ENCODE measurements at regions of chr15 and their contacts with region 1.

Region 1: GRCh38 chr15:88918738-88919137 is 5.6 kb upstream of the MFGE8 start:
- DNase-seq: no peak
- ATAC-seq: no peak
- H3K4me3 ChIP-seq: no peak overlapping the region
- H3K4me3 Mint-ChIP-seq: no peak overlapping the region
- H3K27ac ChIP-seq: no peak overlapping the region
- H3K27ac Mint-ChIP-seq: no peak overlapping the region
- H3K4me1 ChIP-seq: peaks cover 0 to 3% of the 10 kb centered on the region in 2 donors
- H3K4me1 Mint-ChIP-seq: peaks cover under 1% of the 10 kb centered on the region
- H3K27me3 ChIP-seq: peaks cover 0 to 7% (median 0%) of the 10 kb centered on the region in 4 experiments
- H3K27me3 Mint-ChIP-seq: peaks cover 45% of the 10 kb centered on the region
- CTCF ChIP-seq: no peak

Region 2: DNA sequence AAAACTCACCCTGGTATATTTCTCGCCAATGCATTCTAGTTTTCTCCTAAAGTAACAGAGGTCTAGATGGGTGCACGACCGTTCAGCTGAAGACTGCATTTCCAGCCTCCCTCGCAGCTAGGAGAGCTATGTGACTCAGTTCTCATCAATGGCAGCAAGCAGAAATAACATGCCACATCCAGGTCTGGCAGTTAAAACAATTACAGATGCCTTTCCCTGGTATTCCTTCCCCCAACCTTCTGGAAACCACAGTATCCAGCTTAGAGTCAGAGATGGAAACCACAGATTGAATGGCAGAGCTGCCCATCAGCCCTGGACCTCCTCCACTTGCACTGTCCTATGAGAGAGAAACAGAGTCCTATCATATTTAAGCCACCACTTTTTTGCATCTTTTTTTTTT is 28.2 kb before region 1 on chr15:
- CTCF ChIA-PET with region 1: no interaction called
- POLR2A ChIA-PET with region 1: no interaction called
- intact Hi-C with region 1: no loop called
- DNase-seq: no peak
- ATAC-seq: no peak
- H3K4me3 ChIP-seq: no peak overlapping the region
- H3K4me3 Mint-ChIP-seq: no peak overlapping the region
- H3K27ac ChIP-seq: no peak overlapping the region
- H3K27ac Mint-ChIP-seq: no peak overlapping the region
- H3K4me1 ChIP-seq: peaks cover 9 to 16% of the 10 kb centered on the region in 2 donors
- H3K4me1 Mint-ChIP-seq: peaks cover 8% of the 10 kb centered on the region
- H3K27me3 ChIP-seq: peaks cover 0 to 10% (median 0%) of the 10 kb centered on the region in 4 experiments
- H3K27me3 Mint-ChIP-seq: peaks cover 5% of the 10 kb centered on the region
- CTCF ChIP-seq: no peak

Region 3: DNA sequence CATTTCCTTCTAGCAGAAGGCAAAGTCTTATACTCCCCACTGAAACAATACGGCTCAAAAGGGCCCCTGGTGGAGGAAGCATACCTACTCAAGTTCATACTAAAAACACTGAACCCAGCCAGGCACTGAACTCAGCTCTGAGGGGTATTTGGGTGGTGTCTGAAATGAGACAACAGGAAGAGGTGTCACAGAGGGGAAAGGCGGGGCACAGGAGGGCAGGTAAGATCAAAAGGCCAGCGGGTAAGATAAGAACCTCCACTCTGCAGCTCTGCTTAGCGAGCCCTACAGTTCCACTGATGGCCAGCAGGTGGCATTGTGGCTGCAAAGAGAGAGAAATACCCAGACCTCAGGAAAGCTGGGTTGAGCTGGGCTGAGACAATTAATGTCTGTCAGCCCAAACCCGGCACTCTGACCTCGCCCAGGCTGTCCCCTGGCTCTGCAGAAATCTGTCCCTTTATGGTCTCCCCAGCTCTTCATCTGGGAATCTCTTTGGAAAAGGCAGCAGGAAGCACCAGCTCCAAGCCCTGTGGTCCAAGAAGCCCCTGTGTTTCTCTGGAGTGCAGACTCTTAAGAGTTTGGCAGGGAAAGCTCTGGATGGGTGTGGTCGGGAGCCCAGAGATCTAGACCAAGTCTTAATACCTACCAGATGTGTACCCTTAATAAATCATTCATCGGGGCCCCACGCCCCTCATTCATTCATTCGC is 14.0 kb before region 1 on chr15:
- CTCF ChIA-PET with region 1: interaction called, 20 read pairs
- POLR2A ChIA-PET with region 1: no interaction called
- intact Hi-C with region 1: no loop called
- DNase-seq: peak; percentile 83
- ATAC-seq: peak; percentile 88
- H3K4me3 ChIP-seq: no peak overlapping the region
- H3K4me3 Mint-ChIP-seq: no peak overlapping the region
- H3K27ac ChIP-seq: no peak overlapping the region
- H3K27ac Mint-ChIP-seq: no peak overlapping the region
- H3K4me1 ChIP-seq: peaks cover 3 to 8% of the 10 kb centered on the region in 2 donors
- H3K4me1 Mint-ChIP-seq: peaks cover 9% of the 10 kb centered on the region
- H3K27me3 ChIP-seq: no peaks in the 10 kb centered on the region
- H3K27me3 Mint-ChIP-seq: no peaks in the 10 kb centered on the region
- CTCF ChIP-seq: peak; percentile 99

Region 4: GRCh38 chr15:88932271-88932874 is 13.6 kb after region 1 on chr15:
- CTCF ChIA-PET with region 1: no interaction called
- POLR2A ChIA-PET with region 1: no interaction called
- intact Hi-C with region 1: no loop called
- DNase-seq: no peak
- ATAC-seq: no peak
- H3K4me3 ChIP-seq: no peak overlapping the region
- H3K4me3 Mint-ChIP-seq: no peak overlapping the region
- H3K27ac ChIP-seq: no peak overlapping the region
- H3K27ac Mint-ChIP-seq: no peak overlapping the region
- H3K4me1 ChIP-seq: no peaks in the 10 kb centered on the region
- H3K4me1 Mint-ChIP-seq: no peaks in the 10 kb centered on the region
- H3K27me3 ChIP-seq: peaks cover 0 to 13% (median 4%) of the 10 kb centered on the region in 4 experiments
- H3K27me3 Mint-ChIP-seq: peaks cover 52% of the 10 kb centered on the region
- CTCF ChIP-seq: no peak